ENCODE measurements at regions of chr11 and their contacts with region 1.

Region 1: GRCh38 chr11:73141848-73142286 is 251 bp downstream of the FCHSD2 start:
- DNase-seq: peak; percentile 80 to 86
- ATAC-seq: peak; percentile 31 to 59 (median 49)
- H3K4me3 ChIP-seq: peak overlapping the region; percentile 91 to 98 (median 94)
- H3K27ac ChIP-seq: peak overlapping the region; percentile 96 to 99 (median 98)
- H3K4me1 ChIP-seq: peaks cover 0 to 77% (median 52%) of the 10 kb centered on the region in 9 donors
- H3K27me3 ChIP-seq: no peaks in the 10 kb centered on the region
- CTCF ChIP-seq: no peak

Region 2: GRCh38 chr11:72848846-72849466 is 292.9 kb before region 1 on chr11:
- intact Hi-C with region 1: loop called in 1 of 10 experiments (anchors 5 kb)
- DNase-seq: peak in 1 of 2 donors; percentile 50
- ATAC-seq: peak in 7 of 8 donors; percentile 40 to 67 (median 52)
- H3K4me3 ChIP-seq: no peak overlapping the region
- H3K27ac ChIP-seq: peak overlapping the region in 4 of 10 donors; percentile 8 to 58 (median 37)
- H3K4me1 ChIP-seq: peaks cover 1 to 19% (median 10%) of the 10 kb centered on the region in 9 donors
- H3K27me3 ChIP-seq: no peaks in the 10 kb centered on the region
- CTCF ChIP-seq: peak; percentile 44 to 83 (median 72)

Region 3: DNA sequence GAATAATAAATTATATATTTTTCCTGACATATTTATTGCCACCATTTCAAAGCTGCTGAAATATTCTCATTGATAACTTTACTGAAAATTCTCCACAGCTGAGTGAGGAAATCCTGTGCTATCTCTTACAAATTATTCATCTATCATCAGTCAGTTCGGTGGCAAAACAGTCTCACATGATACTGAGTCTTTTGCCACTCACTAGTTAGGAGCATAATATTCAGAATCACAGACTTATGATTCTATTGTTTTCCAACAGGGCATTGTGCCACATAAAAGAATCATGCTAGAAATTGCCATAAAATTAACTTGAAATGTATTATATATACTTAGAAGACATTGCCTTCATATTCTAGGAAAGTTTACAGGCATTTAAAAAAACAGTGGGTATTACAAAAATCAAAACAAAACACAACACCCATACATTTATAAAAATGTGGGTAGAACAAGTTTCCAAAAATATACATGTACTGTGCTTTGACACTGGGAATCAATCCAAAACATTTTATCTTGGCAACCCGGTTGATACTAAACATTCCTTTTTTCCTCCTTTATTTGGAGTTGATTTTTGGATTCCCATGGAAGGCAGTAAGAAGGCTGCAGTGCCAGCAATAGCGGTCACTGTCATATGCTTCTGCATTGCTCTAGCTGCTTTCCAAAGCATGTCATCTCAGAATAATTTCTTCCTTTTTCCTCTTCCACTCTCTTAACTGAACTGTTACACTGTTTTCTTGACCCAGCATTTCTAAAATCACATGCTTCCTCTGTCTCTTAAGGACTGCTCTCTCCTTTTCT is 285.1 kb before region 1 on chr11:
- intact Hi-C with region 1: loop called in 2 of 10 experiments (anchors 5 kb)
- DNase-seq: no peak
- ATAC-seq: peak in 7 of 8 donors; percentile 37 to 75 (median 61)
- H3K4me3 ChIP-seq: no peak overlapping the region
- H3K27ac ChIP-seq: peak overlapping the region; percentile 15 to 82 (median 64)
- H3K4me1 ChIP-seq: peaks cover 0 to 31% (median 19%) of the 10 kb centered on the region in 9 donors
- H3K27me3 ChIP-seq: no peaks in the 10 kb centered on the region
- CTCF ChIP-seq: peak in 4 of 9 donors; percentile 17 to 47 (median 29)

Region 4: DNA sequence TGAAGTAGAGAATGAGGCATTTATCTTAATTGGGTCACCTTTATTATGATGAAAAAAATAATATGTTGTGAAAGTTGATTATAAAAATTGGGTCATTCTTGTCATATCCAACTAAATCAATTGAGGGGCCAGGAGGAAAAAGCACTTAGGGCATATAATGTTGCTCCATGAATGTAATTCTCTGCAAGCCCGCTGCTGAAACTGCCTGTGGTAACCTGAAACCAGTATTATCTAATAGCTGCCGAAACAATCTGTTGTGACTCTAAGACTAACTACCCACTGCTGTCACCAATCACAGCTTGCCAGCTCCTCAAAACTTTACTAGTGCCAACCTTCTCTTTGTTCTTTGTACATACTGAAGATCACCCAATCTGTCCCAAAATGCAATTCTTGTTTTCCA is 211.9 kb before region 1 on chr11:
- intact Hi-C with region 1: loop called in 5 of 10 experiments (anchors 5 to 10 kb)
- DNase-seq: no peak
- ATAC-seq: peak in 4 of 8 donors; percentile 37 to 56 (median 52)
- H3K4me3 ChIP-seq: no peak overlapping the region
- H3K27ac ChIP-seq: no peak overlapping the region
- H3K4me1 ChIP-seq: peaks cover 0 to 54% (median 32%) of the 10 kb centered on the region in 9 donors
- H3K27me3 ChIP-seq: no peaks in the 10 kb centered on the region
- CTCF ChIP-seq: no peak

Region 5: DNA sequence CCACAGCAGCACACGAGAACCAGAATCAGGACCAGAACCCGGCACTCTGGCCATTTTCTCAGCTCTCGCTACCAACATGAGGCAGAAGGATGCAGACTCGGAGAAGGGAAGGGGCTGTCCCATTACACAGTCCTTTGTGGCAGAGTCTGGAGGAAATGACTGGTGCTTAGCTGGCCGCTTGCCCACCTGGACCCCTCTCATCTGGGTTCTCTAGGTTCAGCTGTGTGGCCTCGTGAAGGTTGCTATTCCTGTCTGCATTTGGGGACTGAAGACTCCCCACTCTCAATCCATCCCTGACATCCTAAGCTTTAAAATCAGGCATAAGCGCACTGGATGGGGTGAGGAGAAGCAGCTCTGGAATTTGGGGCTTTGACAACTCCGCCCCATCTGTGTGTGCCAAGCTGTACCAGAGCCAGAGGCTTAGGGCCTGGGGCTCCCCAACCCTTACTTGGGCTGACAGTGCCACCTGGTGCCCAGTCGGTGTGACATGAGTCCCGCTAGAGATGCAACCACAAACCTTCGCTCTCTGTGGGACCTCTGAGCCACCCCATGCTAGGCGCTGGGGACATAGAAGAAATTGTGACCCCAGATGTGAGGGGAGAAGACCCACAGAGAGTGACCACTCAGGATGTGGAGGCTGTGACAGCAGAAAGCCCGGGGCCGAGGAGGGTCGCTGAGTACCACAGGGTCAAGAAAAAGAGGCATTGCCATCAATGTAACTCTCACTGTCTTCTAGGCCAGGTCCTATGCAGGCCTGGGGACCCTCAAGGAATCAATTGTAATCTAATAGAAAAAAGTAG is 36.1 kb after region 1 on chr11:
- intact Hi-C with region 1: loop called in 7 of 10 experiments (anchors 1 to 5 kb)
- DNase-seq: peak; percentile 85 to 88
- ATAC-seq: peak; percentile 60 to 86 (median 74)
- H3K4me3 ChIP-seq: no peak overlapping the region
- H3K27ac ChIP-seq: peak overlapping the region; percentile 69 to 92 (median 86)
- H3K4me1 ChIP-seq: peaks cover 27 to 74% (median 51%) of the 10 kb centered on the region in 9 donors
- H3K27me3 ChIP-seq: no peaks in the 10 kb centered on the region
- CTCF ChIP-seq: peak; percentile 71 to 94 (median 86)